Gastrocnemius medialis (tissue), 4 donors: ENCODE measurements at regions of chr16 and their contacts with region 1.

Region 1: DNA sequence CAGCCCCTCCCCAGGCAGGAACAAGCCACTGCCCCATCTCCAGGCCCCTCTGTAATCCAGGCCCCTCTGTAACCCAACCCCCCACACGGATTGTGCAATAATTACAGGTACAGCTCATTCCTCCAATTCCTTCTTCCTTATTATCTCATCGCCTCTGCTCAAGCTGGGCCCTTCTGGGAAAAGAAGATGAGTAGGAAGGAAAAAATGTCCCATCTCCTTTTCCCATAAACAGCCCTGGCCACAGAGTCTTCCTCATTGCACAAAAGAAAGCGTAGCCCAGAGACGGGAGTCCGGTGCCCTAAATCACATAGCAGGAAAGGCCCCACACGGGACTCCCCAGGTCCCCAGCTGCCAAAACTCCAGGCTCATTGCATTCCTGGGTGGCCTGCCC is 3.6 kb upstream of the LITAFD start:
- DNase-seq: no peak
- ATAC-seq: peak; percentile 44 to 65
- H3K4me3 ChIP-seq: no peak overlapping the region
- H3K27ac ChIP-seq: peak overlapping the region in 1 of 4 donors; percentile 9
- H3K4me1 ChIP-seq: no peaks in the 10 kb centered on the region
- H3K27me3 ChIP-seq: peaks cover 0 to 7% (median 4%) of the 10 kb centered on the region in 3 donors
- CTCF ChIP-seq: no peak
- POLR2A ChIP-seq: no peak

Region 2: GRCh38 chr16:8567750-8568617 is 310.5 kb before region 1 on chr16:
- in situ Hi-C with region 1: loop called in 1 of 4 experiments (anchors 5 kb)
- intact Hi-C with region 1: no loop called
- DNase-seq: peak; percentile 29 to 43
- ATAC-seq: peak; percentile 81 to 93
- H3K4me3 ChIP-seq: no peak overlapping the region
- H3K27ac ChIP-seq: no peak overlapping the region
- H3K4me1 ChIP-seq: no peaks in the 10 kb centered on the region
- H3K27me3 ChIP-seq: peaks cover 0 to 16% (median 7%) of the 10 kb centered on the region in 3 donors
- CTCF ChIP-seq: peak; percentile 88 to 95 (median 91)
- POLR2A ChIP-seq: no peak

Region 3: DNA sequence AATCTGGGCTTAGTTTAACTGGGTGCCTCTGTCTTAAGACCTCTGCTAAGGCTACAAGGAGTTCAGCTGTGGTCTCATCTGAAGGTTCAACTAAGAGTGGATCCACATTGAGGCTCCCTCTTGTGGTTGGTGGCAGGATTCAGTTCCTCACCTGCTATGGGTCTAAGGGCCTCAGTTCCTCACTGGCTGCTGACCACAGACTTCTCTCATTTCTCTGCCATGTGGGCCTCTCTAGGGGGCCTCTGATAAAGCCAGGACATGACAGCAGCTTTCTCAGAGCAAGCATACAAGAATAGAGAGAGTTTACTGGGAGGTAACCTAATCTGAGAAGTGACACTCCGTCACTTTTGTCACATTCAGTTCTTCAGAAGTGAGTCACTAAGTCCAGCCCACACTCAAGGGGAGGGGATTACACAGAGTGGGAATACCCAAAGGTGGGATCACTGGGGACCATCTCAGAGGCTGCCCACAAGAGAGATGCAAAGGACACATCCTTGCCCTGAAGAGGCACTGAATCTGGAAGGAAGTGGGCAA is 223.3 kb before region 1 on chr16:
- in situ Hi-C with region 1: loop called (anchors 5 to 25 kb)
- intact Hi-C with region 1: no loop called
- DNase-seq: no peak
- ATAC-seq: no peak
- H3K4me3 ChIP-seq: no peak overlapping the region
- H3K27ac ChIP-seq: no peak overlapping the region
- H3K4me1 ChIP-seq: no peaks in the 10 kb centered on the region
- H3K27me3 ChIP-seq: no peaks in the 10 kb centered on the region
- CTCF ChIP-seq: peak in 1 of 5 experiments; percentile 38
- POLR2A ChIP-seq: no peak

Region 4: DNA sequence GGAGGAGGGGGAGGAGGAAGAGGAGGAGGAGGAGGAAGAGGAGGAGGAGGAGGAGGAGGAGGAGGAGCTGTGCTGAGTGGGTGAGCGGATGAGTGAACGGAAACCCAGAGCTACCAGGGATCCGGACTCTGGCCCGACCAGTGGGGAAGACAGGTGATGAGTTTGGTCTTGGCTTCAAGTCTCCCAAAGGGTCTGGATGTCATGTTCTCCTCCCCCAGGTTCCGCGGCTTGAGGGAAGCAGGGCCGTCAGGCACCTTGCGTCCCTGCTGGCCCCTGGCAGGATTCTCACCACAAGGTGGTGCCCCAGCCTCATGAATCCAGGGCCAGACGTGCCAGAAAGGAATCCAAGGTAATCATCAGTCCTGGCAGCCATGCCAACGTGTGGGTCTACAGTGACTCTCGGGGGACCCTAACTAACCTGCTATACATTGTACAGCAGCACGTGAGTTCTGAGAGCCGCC is 217.6 kb before region 1 on chr16:
- in situ Hi-C with region 1: loop called (anchors 5 to 25 kb)
- intact Hi-C with region 1: loop called (anchors 1 kb)
- DNase-seq: peak in 1 of 2 donors; percentile 35
- ATAC-seq: peak; percentile 65 to 71
- H3K4me3 ChIP-seq: no peak overlapping the region
- H3K27ac ChIP-seq: no peak overlapping the region
- H3K4me1 ChIP-seq: no peaks in the 10 kb centered on the region
- H3K27me3 ChIP-seq: no peaks in the 10 kb centered on the region
- CTCF ChIP-seq: peak; percentile 44 to 77 (median 54)
- POLR2A ChIP-seq: no peak

Region 5: GRCh38 chr16:8797364-8798173 is 80.9 kb before region 1 on chr16 and contains the starts of genes PMM2 and TMEM186:
- in situ Hi-C with region 1: loop called in 3 of 4 experiments (anchors 10 kb)
- intact Hi-C with region 1: loop called (anchors 5 kb)
- DNase-seq: peak; percentile 95 to 96
- ATAC-seq: peak; percentile 98 to 99
- H3K4me3 ChIP-seq: peak within 1 kb of the TSS; percentile 92 to 100 (median 96)
- H3K27ac ChIP-seq: peak within 1 kb of the TSS; percentile 84 to 98 (median 92)
- H3K4me1 ChIP-seq: peaks cover 26% of the 10 kb centered on the region in 2 donors
- H3K27me3 ChIP-seq: no peaks in the 10 kb centered on the region
- CTCF ChIP-seq: peak in 3 of 5 experiments; percentile 15 to 26 (median 16)
- POLR2A ChIP-seq: peak; percentile 23 to 67
- total RNA-seq, gene PMM2: 10.4 to 20.9 (median 16.6) TPM
- total RNA-seq, gene TMEM186: 10.2 to 16.9 (median 11.9) TPM